Aorta (tissue), 5 donors: ENCODE measurements at regions of chr4 and their contacts with region 1.

Region 1: GRCh38 chr4:26028793-26029567 is 115.0 kb downstream of the SMIM20 start:
- DNase-seq: peak; percentile 83 to 93
- ATAC-seq: peak; percentile 84
- H3K4me3 ChIP-seq: no peak overlapping the region
- H3K27ac ChIP-seq: no peak overlapping the region
- H3K4me1 ChIP-seq: peaks cover 2 to 6% of the 10 kb centered on the region in 2 donors
- H3K27me3 ChIP-seq: no peaks in the 10 kb centered on the region

Region 2: DNA sequence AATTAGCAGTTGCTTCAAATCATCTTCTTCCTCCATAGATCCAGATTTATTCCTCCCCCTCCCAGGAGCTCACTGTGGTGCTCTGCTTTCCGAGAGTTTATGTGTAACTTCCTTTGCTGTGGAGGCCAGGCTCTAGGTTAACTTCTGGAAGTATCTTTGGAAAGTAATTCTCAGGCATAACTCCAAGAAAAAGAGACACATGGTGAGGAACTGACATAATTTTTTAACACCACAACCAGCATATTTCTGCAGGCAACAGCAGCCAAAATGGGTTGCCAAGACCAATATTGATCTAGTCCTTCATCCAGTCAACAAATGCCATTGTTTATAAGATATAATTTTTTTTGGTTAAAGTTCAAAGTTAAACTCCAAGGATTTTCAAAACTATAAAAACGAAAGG is 177.4 kb after region 1 on chr4:
- intact Hi-C with region 1: loop called (anchors 10 kb)
- DNase-seq: no peak
- ATAC-seq: peak; percentile 90
- H3K4me3 ChIP-seq: no peak overlapping the region
- H3K27ac ChIP-seq: peak overlapping the region in 1 of 2 donors; percentile 12
- H3K4me1 ChIP-seq: peaks cover 0 to 4% of the 10 kb centered on the region in 2 donors
- H3K27me3 ChIP-seq: no peaks in the 10 kb centered on the region

Region 3: DNA sequence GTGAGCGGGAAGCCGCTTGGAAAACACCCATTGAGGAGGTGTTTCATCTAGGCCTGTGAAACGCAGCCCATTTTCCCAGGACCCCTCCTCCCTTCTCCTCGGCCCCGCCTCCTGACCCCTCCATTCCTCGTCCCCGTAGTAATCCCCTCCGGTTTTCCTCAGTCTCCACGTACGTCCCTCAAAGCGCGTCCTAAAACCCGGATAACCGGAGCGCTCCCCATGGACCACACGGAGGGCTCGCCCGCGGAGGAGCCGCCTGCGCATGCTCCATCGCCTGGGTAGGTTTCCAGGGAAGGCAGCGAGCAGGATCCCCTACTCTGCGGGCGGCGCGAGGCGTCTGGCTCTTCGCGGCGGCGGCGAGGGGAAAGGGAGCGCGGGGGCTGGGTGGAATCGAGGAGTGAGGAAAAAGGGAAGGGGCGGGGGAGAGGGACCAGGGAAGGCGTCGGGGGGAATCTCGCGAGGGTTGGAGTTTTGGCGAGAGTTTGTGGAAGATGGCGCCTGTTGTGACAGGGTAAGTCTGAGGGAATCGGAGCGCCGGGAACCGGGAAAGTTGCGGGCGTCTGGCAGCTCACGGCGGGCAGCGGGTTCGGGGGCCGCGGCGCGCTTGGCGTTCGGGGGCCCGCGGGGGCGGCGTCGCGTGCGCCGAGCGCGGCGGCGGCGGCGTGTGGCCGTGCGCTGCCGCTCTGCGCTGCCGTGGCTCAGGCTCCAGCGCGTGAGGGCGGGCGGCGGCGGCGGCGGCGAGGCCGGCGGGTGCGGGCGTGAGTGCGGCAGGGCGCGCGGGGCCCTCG is 291.8 kb after region 1 on chr4 and contains the start of gene RBPJ:
- intact Hi-C with region 1: loop called (anchors 5 to 10 kb)
- DNase-seq: peak; percentile 95 to 98
- ATAC-seq: peak; percentile 92
- H3K4me3 ChIP-seq: peak within 1 kb of the TSS; percentile 67 to 84
- H3K27ac ChIP-seq: peak within 1 kb of the TSS; percentile 51 to 88
- H3K4me1 ChIP-seq: peaks cover 0 to 2% of the 10 kb centered on the region in 2 donors
- H3K27me3 ChIP-seq: no peaks in the 10 kb centered on the region
- total RNA-seq, gene RBPJ: 83.7 to 162 TPM

Region 4: GRCh38 chr4:27010334-27010940 is 981.5 kb after region 1 on chr4:
- intact Hi-C with region 1: loop called in 1 of 2 experiments (anchors 10 kb)
- DNase-seq: peak; percentile 69 to 82
- ATAC-seq: peak; percentile 87
- H3K4me3 ChIP-seq: no peak overlapping the region
- H3K27ac ChIP-seq: no peak overlapping the region
- H3K4me1 ChIP-seq: no peaks in the 10 kb centered on the region
- H3K27me3 ChIP-seq: no peaks in the 10 kb centered on the region